ENCODE measurements at regions of chr7 and their contacts with region 1.

Region 1: DNA sequence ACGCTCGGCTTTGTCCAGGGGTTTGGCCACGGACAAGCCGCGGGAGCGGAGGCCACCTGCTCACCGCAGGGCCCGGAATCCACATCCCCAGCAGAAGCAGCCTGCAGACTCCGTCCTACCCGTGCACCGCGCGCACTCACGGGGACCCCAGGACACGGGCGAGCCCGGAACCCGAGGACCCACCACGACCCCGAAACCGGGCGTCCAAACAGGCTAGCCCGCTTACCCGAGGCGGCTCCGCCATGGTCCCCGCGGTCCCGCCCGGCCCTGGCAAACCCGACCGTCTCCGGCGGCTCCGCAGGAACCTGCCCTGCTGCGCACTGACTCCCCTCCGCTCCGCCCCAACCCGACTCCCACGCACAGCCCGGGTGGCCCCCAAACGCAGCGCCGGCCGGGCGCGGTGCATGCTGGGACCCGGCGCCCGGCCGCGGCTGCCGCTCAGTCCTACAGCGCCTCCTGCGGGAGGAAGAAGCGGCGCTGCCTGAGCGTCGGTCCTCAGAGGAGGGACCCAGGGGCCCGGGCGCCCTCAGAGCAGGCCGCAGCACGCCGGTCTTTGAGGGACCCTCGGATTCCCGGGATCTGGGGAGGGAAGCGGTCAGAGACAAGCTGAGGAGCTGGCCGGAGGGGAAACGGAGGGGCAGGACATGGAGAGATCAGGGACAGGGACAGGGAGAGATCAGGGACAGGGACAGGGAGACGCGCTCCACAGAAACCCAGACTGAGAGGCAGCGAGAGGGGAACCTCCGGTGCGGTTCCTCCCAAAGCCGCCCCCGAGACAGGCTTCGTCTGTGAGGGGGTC is at the start of gene ZNF786:
- DNase-seq: peak; percentile 48
- ATAC-seq: peak; percentile 94
- H3K4me3 ChIP-seq: peak within 1 kb of the TSS; percentile 93
- H3K27ac ChIP-seq: peak within 1 kb of the TSS; percentile 93
- H3K4me1 ChIP-seq: peaks cover 6% of the 10 kb centered on the region; the same call in 1 of the 2 replicates
- H3K27me3 ChIP-seq: no peaks in the 10 kb centered on the region
- CTCF ChIP-seq: peak; percentile 88 to 98 (median 91); a peak in 5 of 6 replicates
- EP300 ChIP-seq: 0 out of 4 replicates have a peak, but pooled peaks of 1 of the 2 experiments have one; percentile 9
- POLR2A ChIP-seq: peak; percentile 98
- RAD21 ChIP-seq: peak; percentile 90
- polyA plus RNA-seq, gene ZNF786: 0.47 to 0.86 TPM

Region 2: DNA sequence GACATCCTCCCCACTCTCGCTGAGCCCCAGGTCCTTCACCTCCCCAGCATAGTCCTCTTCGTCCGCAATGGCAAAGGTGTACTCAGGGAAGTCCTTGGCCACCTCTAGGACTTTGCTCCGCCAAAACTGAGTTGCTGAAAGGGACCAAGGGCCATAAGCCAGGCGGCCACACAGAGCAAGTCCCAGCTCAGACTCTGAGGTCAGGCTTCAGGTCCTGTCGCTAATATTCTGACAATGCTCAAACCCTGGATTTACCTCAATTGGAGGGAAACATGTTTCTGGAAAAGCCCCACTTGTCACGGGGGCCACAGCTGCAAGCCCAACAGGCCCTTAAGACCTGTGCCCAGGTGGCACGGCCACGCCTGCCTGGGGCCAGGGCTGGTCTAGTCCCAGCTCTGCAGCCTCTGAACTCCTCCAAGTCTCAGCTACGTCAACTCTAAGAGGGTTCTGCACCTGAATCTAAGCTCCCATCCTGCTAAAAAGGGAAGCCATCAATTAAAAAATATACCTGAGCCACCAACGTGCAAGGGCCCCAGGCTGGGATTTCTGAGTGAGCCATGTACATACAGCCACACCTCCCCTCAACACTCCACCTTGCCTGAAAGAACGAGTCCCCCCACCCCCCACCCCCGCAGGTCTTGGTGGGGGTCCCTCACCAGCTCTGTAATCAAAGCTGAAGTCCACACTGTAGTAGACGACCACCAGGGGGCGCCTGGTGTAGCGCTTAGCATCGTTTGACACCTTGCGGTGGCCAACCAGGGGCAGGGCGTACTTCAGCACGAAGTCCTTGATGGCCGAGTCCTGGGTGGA is 85.2 kb before region 1 on chr7:
- CTCF ChIA-PET with region 1: interaction called, 5 read pairs
- POLR2A ChIA-PET with region 1: no interaction called
- RAD21 ChIA-PET with region 1: interaction called, 3 read pairs
- SMC1A ChIA-PET with region 1: interaction called, 3 read pairs
- in situ Hi-C with region 1: no loop called
- intact Hi-C with region 1: loop called (anchors 1 kb)
- DNase-seq: no peak
- ATAC-seq: peak; percentile 99
- H3K4me3 ChIP-seq: no peak overlapping the region
- H3K27ac ChIP-seq: no peak overlapping the region
- H3K4me1 ChIP-seq: no peaks in the 10 kb centered on the region
- H3K27me3 ChIP-seq: no peaks in the 10 kb centered on the region
- CTCF ChIP-seq: peak; percentile 70 to 81 (median 77)
- EP300 ChIP-seq: no peak
- POLR2A ChIP-seq: no peak; the same call in 1 of the 2 replicates
- RAD21 ChIP-seq: peak; percentile 70

Region 3: GRCh38 chr7:149103424-149103823 is 12.8 kb after region 1 on chr7:
- CTCF ChIA-PET with region 1: no interaction called
- POLR2A ChIA-PET with region 1: interaction called, 10 read pairs
- RAD21 ChIA-PET with region 1: no interaction called
- SMC1A ChIA-PET with region 1: no interaction called
- in situ Hi-C with region 1: no loop called
- intact Hi-C with region 1: no loop called
- DNase-seq: no peak
- ATAC-seq: no peak
- H3K4me3 ChIP-seq: no peak overlapping the region
- H3K27ac ChIP-seq: no peak overlapping the region
- H3K4me1 ChIP-seq: no peaks in the 10 kb centered on the region
- H3K27me3 ChIP-seq: no peaks in the 10 kb centered on the region
- CTCF ChIP-seq: no peak
- EP300 ChIP-seq: no peak
- POLR2A ChIP-seq: no peak
- RAD21 ChIP-seq: no peak